HEK293 (cell line): ENCODE measurements at regions of chr16 and their contacts with region 1.

Region 1: DNA sequence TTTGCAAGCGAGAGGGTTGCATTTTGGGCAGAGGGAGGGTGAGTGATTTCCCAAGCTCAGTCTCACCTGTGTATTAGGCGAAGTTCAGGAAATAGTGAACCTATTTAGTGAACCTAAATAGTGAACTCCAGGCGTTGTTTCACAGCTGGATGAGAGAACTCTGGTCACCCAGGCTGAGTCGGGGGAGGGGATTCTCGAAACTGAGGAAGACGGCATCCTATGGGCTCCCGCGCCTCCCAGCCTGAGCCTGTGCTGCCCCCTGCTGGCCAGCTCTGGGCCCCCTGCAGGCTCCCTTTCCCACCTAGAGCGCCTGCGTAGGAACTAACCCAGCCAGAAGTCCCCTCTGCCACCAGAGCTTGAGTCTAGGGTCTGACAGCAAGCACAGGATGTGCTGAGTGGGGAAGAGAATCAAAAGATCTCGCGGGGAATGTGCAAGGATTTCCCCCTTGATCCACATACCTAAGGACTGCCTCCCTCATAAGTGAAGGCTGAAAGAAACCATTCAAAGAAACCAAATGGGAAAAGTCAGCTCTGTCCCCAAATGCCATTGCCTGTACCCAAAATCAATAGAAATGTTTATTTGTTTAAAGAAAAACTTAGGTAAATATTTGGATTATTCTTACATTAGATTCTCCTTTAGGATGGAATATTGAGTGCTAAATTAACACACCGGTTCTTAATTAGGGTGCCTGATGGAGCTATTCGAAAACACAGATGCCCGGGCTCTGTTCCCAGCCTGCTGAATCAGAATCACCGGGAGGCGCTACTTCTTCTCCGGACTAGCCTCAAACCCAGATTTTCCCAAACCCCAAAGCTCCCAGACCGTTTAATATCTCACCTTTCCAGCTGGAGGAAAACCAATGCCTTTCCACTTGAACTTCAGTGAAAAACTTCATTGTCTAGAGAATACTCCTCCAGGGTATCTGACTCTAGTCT is 14.8 kb upstream of the MARVELD3 start:
- H3K4me3 ChIP-seq: no peak overlapping the region
- H3K27ac ChIP-seq: no peak overlapping the region
- H3K4me1 ChIP-seq: no peaks in the 10 kb centered on the region
- CTCF ChIP-seq: peak; percentile 91

Region 2: GRCh38 chr16:71484006-71484893 is 127.0 kb before region 1 on chr16:
- CTCF ChIA-PET with region 1: interaction called, 13 read pairs
- POLR2A ChIA-PET with region 1: no interaction called
- H3K4me3 ChIP-seq: peak overlapping the region; percentile 59
- H3K27ac ChIP-seq: peak overlapping the region; percentile 58; the same call in 1 of the 2 replicates
- H3K4me1 ChIP-seq: no peaks in the 10 kb centered on the region
- CTCF ChIP-seq: no peak

Region 3: DNA sequence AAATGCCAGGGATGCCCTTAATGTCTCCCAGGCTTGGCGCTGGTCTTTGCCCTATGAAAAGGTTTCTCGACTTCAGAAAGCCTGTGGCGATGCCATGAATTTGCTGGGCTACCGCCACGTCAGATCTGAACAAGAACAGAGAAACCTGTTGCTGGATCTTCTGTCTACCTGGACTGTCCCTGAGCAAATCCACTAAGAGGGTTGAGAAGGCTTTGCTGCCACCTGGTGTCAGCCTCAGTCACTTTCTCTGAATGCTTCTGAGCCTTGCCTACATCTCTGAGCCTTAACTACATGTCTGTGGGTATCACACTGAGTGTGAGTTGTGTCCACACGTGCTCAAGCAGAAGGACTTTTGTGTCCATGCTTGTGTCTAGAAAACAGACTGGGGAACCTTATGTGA is 73.6 kb before region 1 on chr16:
- CTCF ChIA-PET with region 1: interaction called, 20 read pairs
- POLR2A ChIA-PET with region 1: no interaction called
- H3K4me3 ChIP-seq: no peak overlapping the region
- H3K27ac ChIP-seq: no peak overlapping the region
- H3K4me1 ChIP-seq: no peaks in the 10 kb centered on the region
- CTCF ChIP-seq: peak; percentile 53; the same call in 1 of the 2 replicates

Region 4: DNA sequence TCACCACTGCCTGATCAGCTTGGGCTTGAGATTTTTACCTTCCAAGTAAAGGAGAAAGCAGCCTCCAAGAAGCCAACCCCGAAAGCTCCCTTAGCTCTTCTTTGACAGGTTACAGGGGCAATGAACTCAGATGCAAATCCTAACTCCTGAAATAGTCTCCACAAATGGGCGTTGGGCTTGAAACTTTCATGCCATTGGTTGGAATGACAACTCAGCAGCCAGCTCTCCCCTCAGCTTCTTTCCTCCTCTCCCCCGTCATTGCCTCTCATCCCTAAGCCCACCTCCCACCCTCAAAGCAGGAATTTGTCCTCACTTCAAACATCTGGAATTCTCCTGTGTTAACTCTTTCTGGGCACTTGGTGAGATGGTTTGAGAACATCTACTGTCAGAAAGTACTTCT is 34.2 kb before region 1 on chr16 and contains the start of gene TAT:
- CTCF ChIA-PET with region 1: interaction called, 14 read pairs
- POLR2A ChIA-PET with region 1: no interaction called
- H3K4me3 ChIP-seq: no peak within 1 kb of the TSS
- H3K27ac ChIP-seq: no peak within 1 kb of the TSS
- H3K4me1 ChIP-seq: no peaks in the 10 kb centered on the region
- CTCF ChIP-seq: no peak

Region 5: DNA sequence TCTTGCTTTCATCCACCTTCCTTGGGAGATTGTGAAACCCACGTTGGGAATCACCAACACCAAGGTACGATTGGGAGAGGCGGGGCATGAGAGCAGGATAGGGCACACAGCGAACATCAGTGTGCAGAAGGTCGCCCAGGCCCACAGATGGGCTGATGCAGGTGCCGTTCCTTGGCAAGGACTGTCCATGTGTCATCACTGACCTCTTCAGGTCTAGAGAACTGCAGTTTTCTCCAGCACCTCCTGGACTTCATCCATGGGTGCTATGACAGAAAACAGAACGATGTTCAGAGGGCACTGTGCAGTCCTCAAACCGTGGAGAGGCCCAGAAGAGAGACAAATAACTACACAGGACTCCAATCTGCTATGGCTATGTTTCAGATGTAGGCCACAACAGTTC is 10.4 kb before region 1 on chr16:
- CTCF ChIA-PET with region 1: interaction called, 17 read pairs
- POLR2A ChIA-PET with region 1: no interaction called
- H3K4me3 ChIP-seq: no peak overlapping the region
- H3K27ac ChIP-seq: no peak overlapping the region
- H3K4me1 ChIP-seq: no peaks in the 10 kb centered on the region
- CTCF ChIP-seq: no peak